H1 (cell line): ENCODE measurements at regions of chr3 and their contacts with region 1.

Region 1: DNA sequence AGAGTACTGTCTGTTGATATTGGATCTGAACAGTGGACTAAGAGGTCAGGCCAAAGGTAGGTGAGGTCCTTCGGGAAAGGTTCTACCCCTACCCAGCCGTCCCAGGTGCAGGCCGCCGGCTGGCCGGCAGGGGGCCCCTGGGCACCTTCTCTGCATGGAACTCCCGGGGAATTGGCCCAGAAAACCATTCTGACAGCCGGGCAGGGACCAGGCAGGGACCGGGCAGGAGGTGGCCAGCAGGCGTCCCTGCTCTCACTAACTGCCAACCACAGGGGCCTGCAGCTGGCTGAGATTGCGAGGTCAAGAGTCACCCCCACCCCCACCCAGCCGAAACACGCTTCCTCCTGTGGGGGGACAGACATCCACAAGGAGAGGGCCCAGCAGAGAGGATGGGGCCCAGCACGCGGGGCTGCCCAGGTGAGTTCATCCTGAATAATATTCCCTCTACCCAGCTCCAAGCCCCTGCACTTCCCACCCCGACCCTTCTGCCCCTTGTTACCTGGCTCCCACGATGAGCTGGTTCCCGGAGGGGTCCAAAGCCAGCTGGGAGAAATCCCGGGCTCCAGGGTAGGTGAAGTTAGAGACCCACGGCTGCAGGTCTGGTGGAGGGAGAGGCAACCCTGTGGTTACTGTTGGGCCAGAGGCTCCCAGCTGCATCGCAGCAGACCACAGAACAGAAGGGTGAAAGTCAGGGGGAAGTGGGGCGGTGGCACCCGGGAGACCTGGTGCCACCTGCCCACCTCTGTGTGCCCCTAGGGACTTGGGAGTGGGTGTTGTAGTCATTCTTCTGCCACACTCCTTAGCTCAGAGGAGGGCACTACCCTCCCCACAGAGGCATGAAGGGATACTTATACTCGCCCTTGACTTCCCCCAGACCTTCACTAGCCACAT is 84.4 kb downstream of the SEMA5B start:
- DNase-seq: peak; percentile 49 to 96
- H3K4me3 ChIP-seq: 0 out of 8 replicates have a peak overlapping the region, but pooled peaks of 1 of the 4 experiments have one; percentile 10
- H3K27ac ChIP-seq: no peak overlapping the region
- H3K4me1 ChIP-seq: peaks cover 2 to 18% (median 4%) of the 10 kb centered on the region in 4 experiments; a peak in 6 of 7 replicates
- H3K27me3 ChIP-seq: no peaks in the 10 kb centered on the region; a peak in 3 of 7 replicates
- CTCF ChIP-seq: peak; percentile 78 to 99 (median 96)
- EP300 ChIP-seq: no peak
- POLR2A ChIP-seq: no peak
- RAD21 ChIP-seq: peak; percentile 95 to 98

Region 2: GRCh38 chr3:122902326-122902725 is 40.9 kb before region 1 on chr3:
- CTCF ChIA-PET with region 1: interaction called, 10 read pairs
- POLR2A ChIA-PET with region 1: no interaction called
- DNase-seq: no peak
- H3K4me3 ChIP-seq: no peak overlapping the region
- H3K27ac ChIP-seq: no peak overlapping the region
- H3K4me1 ChIP-seq: no peaks in the 10 kb centered on the region; a peak in 1 of 7 replicates
- H3K27me3 ChIP-seq: no peaks in the 10 kb centered on the region
- CTCF ChIP-seq: no peak
- EP300 ChIP-seq: no peak
- POLR2A ChIP-seq: no peak
- RAD21 ChIP-seq: no peak

Region 3: GRCh38 chr3:122964811-122965210 is 21.6 kb after region 1 on chr3:
- CTCF ChIA-PET with region 1: interaction called, 17 read pairs
- POLR2A ChIA-PET with region 1: no interaction called
- DNase-seq: no peak
- H3K4me3 ChIP-seq: no peak overlapping the region
- H3K27ac ChIP-seq: no peak overlapping the region
- H3K4me1 ChIP-seq: no peaks in the 10 kb centered on the region; a peak in 3 of 7 replicates
- H3K27me3 ChIP-seq: no peaks in the 10 kb centered on the region
- CTCF ChIP-seq: no peak
- EP300 ChIP-seq: no peak
- POLR2A ChIP-seq: no peak
- RAD21 ChIP-seq: no peak

Region 4: DNA sequence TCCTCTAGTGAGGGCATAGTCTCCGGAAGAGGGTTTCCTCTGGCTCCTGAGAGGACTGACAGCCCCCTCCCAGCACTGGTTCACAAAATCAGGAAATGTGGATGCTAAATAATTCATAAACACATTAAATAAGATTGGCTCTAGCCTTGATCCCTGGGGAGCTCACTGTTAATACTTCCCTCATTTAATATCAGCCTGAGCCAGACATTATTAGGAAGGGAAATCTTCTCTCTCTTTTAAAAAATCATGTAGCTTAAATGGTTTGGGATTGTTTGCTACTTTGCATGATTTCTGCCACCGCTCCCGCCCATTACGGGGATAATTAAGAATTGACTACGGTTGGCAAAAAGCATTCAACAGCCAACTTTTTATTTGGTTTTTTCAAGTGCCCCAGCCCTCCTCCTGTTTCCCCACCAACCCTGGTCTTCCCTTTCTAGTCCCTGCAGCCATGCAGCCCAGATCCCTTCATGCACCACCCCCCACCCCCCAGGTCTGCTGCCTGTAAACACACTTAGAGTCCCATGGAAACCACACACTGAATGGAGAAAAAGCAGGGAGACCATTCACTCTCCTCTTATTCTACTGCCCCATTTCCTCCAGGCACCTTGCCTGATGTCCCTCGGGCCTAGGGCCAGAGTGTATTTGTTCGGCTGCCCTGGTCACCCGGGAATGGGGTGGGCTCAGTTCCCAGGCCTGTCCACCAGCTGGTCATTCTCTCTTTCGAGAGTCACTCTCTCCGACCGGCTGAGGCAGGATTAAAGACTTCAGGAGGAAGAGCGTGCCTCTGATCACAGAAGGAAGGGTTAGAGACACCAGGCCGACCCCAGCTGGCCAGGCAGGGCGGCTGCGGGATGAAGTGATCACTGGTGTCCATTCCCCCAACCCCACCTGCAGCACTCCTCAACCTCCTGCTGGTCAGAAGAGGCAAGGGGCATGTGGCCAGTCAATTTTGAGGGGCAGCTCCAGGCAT is 39.3 kb after region 1 on chr3:
- CTCF ChIA-PET with region 1: interaction called, 20 read pairs
- POLR2A ChIA-PET with region 1: no interaction called
- DNase-seq: no peak
- H3K4me3 ChIP-seq: no peak overlapping the region
- H3K27ac ChIP-seq: no peak overlapping the region
- H3K4me1 ChIP-seq: peaks cover 16 to 52% (median 36%) of the 10 kb centered on the region in 4 experiments
- H3K27me3 ChIP-seq: no peaks in the 10 kb centered on the region
- CTCF ChIP-seq: peak in 2 of 3 experiments; percentile 40; a peak in 3 of 4 replicates
- EP300 ChIP-seq: no peak
- POLR2A ChIP-seq: no peak
- RAD21 ChIP-seq: peak; percentile 32 to 50

Region 5: GRCh38 chr3:123015557-123015956 is 72.4 kb after region 1 on chr3:
- CTCF ChIA-PET with region 1: interaction called, 34 read pairs
- POLR2A ChIA-PET with region 1: interaction called, 3 read pairs
- DNase-seq: no peak
- H3K4me3 ChIP-seq: no peak overlapping the region
- H3K27ac ChIP-seq: no peak overlapping the region
- H3K4me1 ChIP-seq: peaks cover 0 to 4% (median under 1%) of the 10 kb centered on the region in 4 experiments; a peak in 5 of 7 replicates
- H3K27me3 ChIP-seq: no peaks in the 10 kb centered on the region
- CTCF ChIP-seq: peak; percentile 14 to 43 (median 32)
- EP300 ChIP-seq: no peak
- POLR2A ChIP-seq: no peak
- RAD21 ChIP-seq: peak; percentile 45 to 61

Region 6: DNA sequence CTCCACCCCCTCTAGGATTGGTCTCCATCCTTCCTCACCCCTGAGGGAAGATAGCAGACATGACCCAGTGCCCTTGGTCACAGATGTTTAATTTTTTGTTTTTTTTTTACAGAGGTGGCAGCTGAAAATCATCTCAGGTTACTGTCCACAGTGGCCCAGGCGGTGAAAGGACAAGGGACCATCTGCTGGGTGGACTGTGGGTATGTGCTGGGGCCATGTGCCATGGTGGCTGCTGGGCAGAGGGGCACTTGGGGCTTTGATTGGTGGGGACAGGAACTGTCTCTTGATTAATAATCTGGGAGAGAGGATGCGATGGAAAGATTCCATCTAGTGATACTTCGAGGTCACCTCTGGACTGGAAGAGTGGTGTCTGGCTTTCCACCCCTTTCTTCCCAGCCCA is 149.1 kb after region 1 on chr3:
- CTCF ChIA-PET with region 1: no interaction called
- POLR2A ChIA-PET with region 1: no interaction called
- DNase-seq: no peak
- H3K4me3 ChIP-seq: no peak overlapping the region
- H3K27ac ChIP-seq: no peak overlapping the region
- H3K4me1 ChIP-seq: peaks cover 0 to 19% (median 7%) of the 10 kb centered on the region in 4 experiments; a peak in 6 of 7 replicates
- H3K27me3 ChIP-seq: no peaks in the 10 kb centered on the region
- CTCF ChIP-seq: no peak
- EP300 ChIP-seq: no peak
- POLR2A ChIP-seq: no peak
- RAD21 ChIP-seq: no peak